PC-9 (cell line): ENCODE measurements at regions of chr2 and their contacts with region 1.

Region 1: DNA sequence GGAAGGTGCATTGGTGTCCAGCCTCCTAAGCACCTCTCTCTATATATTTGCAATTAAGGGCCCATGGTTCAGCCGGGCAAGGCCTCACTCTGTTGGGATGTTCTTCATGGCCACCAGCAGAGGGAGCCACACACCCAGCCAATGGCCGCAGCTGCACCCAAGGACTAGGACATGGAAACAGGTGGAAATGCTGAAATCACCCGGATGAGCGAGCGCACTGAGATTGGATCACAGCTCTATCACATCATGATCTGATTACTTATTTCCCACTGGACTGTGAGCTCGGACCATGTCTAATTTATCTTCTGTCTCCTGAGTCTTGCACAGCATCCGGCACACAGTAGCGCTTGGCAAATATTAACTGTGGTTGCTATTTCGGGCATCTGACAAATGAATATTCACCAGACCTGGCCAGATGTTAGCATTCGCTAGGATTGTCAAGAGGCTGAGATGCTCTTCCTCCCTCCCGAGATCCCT is 31.2 kb downstream of the KIF3C start:
- DNase-seq: peak; percentile 67 to 68
- H3K4me3 ChIP-seq: no peak overlapping the region
- H3K27ac ChIP-seq: no peak overlapping the region
- H3K4me1 ChIP-seq: no peaks in the 10 kb centered on the region
- H3K27me3 ChIP-seq: no peaks in the 10 kb centered on the region
- CTCF ChIP-seq: peak; percentile 99

Region 2: DNA sequence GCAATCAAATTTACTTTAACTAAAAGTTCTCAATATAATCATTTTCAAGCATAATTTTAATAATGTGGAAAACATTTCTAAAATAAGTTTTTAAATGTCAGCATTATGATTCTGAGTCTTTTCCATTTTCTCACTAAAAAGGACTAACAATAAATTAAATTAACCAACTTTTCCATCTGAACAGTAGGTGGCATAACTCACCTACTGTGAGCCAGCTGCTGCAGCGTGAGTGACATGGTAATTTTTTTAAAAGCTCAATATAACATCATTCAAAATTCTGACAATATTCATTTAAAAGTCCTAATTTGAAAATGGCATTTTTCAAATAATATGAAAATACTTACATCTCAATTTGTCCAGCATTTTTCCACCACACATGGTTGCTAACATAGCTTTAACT is 344.2 kb before region 1 on chr2:
- CTCF ChIA-PET with region 1: no interaction called
- POLR2A ChIA-PET with region 1: no interaction called
- intact Hi-C with region 1: loop called (anchors 5 kb)
- DNase-seq: no peak
- H3K4me3 ChIP-seq: no peak overlapping the region
- H3K27ac ChIP-seq: no peak overlapping the region
- H3K4me1 ChIP-seq: no peaks in the 10 kb centered on the region
- H3K27me3 ChIP-seq: no peaks in the 10 kb centered on the region
- CTCF ChIP-seq: peak; percentile 91

Region 3: DNA sequence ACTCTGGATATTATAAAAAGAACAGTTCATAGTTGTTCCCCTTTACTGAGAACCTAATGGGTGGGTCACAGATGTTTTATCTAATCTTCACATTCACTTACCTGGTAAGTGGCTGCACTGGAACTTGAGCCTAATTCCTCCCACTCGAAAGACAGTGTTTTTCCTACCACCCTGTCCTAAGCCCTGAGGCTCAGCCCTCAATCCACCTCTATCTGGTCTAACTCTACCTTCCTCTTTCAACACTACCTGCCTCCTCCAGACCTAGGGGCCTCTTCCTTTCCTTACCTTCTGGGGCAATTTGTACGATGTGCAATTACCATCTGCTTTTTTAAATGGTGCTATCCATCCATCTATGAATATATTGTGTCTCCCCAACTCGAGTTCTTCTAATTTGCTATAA is 40.9 kb after region 1 on chr2:
- CTCF ChIA-PET with region 1: interaction called, 5 read pairs
- POLR2A ChIA-PET with region 1: no interaction called
- intact Hi-C with region 1: loop called (anchors 2 kb)
- DNase-seq: no peak
- H3K4me3 ChIP-seq: no peak overlapping the region
- H3K27ac ChIP-seq: peak overlapping the region; percentile 50
- H3K4me1 ChIP-seq: peaks cover 21% of the 10 kb centered on the region
- H3K27me3 ChIP-seq: no peaks in the 10 kb centered on the region
- CTCF ChIP-seq: no peak

Region 4: DNA sequence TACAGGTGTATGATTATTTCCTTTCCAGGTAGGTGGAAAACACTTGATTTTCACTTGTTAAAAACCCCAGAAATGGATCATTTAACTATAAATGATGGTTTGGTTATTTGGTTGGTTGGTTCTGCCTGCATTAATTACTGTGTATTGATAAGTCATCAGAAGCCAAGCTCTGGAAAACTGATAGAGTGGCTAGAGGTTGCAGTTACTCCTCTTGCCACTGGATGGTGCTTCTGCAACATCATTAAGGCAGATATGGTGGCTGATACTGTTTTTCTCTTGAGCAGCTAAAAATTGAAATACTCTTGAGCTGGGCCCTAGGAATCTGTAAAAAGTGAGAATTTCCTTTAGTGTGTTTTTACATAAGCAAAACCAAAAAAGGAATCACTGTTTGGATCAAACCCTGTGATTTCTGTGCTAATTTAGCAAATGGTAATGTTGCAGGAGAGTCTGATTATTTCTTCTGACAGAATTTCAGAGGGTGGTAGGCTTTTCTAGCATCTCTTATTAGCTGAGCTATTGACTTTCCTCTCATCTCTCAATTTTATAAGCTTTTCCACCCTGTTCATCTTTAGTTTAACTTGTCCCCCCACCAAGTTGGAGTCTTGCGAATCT is 137.0 kb after region 1 on chr2:
- CTCF ChIA-PET with region 1: no interaction called
- POLR2A ChIA-PET with region 1: interaction called, 14 read pairs
- intact Hi-C with region 1: no loop called
- DNase-seq: no peak
- H3K4me3 ChIP-seq: no peak overlapping the region
- H3K27ac ChIP-seq: no peak overlapping the region
- H3K4me1 ChIP-seq: no peaks in the 10 kb centered on the region
- H3K27me3 ChIP-seq: no peaks in the 10 kb centered on the region
- CTCF ChIP-seq: peak; percentile 78

Region 5: GRCh38 chr2:26196683-26197418 is 245.7 kb after region 1 on chr2:
- CTCF ChIA-PET with region 1: no interaction called
- POLR2A ChIA-PET with region 1: no interaction called
- intact Hi-C with region 1: loop called (anchors 5 kb)
- DNase-seq: no peak
- H3K4me3 ChIP-seq: no peak overlapping the region
- H3K27ac ChIP-seq: no peak overlapping the region
- H3K4me1 ChIP-seq: no peaks in the 10 kb centered on the region
- H3K27me3 ChIP-seq: no peaks in the 10 kb centered on the region
- CTCF ChIP-seq: no peak

Region 6: GRCh38 chr2:26577434-26578112 is 626.5 kb after region 1 on chr2:
- CTCF ChIA-PET with region 1: no interaction called
- POLR2A ChIA-PET with region 1: no interaction called
- intact Hi-C with region 1: loop called (anchors 1 kb)
- DNase-seq: peak; percentile 42 to 63
- H3K4me3 ChIP-seq: no peak overlapping the region
- H3K27ac ChIP-seq: no peak overlapping the region
- H3K4me1 ChIP-seq: peaks cover 15% of the 10 kb centered on the region
- H3K27me3 ChIP-seq: peaks cover 20% of the 10 kb centered on the region; the same call in 1 of the 2 replicates
- CTCF ChIP-seq: peak; percentile 98